Adrenal gland (tissue), 19 donors: ENCODE measurements at regions of chr5 and their contacts with region 1.

Region 1: GRCh38 chr5:140632150-140633020 is 590 bp downstream of the CD14 start:
- DNase-seq: peak; percentile 59 to 86 (median 78)
- H3K4me3 ChIP-seq: peak overlapping the region; percentile 34 to 78 (median 54)
- H3K27ac ChIP-seq: peak overlapping the region; percentile 55 to 95 (median 89)
- H3K4me1 ChIP-seq: peaks cover 0 to 38% of the 10 kb centered on the region in 2 donors
- H3K27me3 ChIP-seq: no peaks in the 10 kb centered on the region
- CTCF ChIP-seq: no peak
- POLR2A ChIP-seq: peak; percentile 3 to 45

Region 2: DNA sequence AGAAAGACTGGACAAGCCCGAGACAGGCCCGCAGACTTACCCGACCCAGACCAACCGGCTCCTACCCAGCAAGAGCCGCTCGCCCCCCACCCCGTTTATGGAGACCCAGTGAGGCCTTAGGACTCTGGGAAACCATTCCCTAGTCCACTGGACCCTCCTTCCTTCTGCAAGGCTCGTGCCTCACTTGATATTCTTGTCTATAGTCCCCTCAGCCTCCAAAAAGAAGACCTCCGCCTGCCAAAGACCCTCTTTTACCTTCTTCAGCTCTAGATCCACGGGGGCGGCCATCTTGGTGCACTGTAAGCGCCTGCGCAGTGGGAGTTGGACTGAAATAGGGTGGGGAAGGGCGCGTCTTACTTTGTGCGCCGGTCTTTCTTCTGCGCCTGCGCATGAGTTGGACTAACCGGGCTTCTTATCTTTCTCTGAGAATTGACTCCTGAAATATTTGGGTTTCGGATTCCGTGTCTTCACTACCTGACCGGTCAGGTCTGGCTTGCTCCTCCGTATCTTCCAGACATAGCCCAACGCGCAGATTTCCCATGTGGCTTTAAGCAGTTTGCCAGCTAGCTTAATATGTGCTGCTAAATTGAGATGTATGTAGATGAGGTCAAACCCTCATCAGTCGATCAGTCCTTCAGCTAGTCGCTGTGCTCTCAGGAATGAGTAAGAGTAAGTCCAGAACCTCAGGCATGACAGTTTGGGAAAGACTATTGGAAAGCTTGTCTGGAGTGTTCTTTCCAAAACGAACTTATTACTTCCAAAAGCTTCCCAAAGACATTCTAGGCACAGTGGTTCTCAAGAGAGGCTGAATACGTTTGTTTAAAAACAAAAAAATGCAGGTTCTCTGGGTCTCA is 329.4 kb before region 1 on chr5 and contains the start of gene PFDN1:
- intact Hi-C with region 1: no loop called
- DNase-seq: peak; percentile 92 to 98 (median 96)
- H3K4me3 ChIP-seq: peak within 1 kb of the TSS; percentile 13 to 69 (median 59)
- H3K27ac ChIP-seq: peak within 1 kb of the TSS; percentile 10 to 83 (median 70)
- H3K4me1 ChIP-seq: peaks cover 11 to 31% of the 10 kb centered on the region in 2 donors
- H3K27me3 ChIP-seq: no peaks in the 10 kb centered on the region
- CTCF ChIP-seq: no peak
- POLR2A ChIP-seq: peak in 1 of 2 donors; percentile 54
- total RNA-seq, gene PFDN1: 49.1 to 194 (median 77.1) TPM

Region 3: GRCh38 chr5:140575309-140575708 is 57.1 kb before region 1 on chr5:
- intact Hi-C with region 1: loop called in 1 of 2 experiments (anchors 5 kb)
- DNase-seq: peak; percentile 67 to 87 (median 79)
- H3K4me3 ChIP-seq: no peak overlapping the region
- H3K27ac ChIP-seq: peak overlapping the region in 1 of 5 donors; percentile 80
- H3K4me1 ChIP-seq: peaks cover 5 to 34% of the 10 kb centered on the region in 2 donors
- H3K27me3 ChIP-seq: no peaks in the 10 kb centered on the region
- CTCF ChIP-seq: peak; percentile 40 to 77 (median 67)
- POLR2A ChIP-seq: no peak

Region 4: DNA sequence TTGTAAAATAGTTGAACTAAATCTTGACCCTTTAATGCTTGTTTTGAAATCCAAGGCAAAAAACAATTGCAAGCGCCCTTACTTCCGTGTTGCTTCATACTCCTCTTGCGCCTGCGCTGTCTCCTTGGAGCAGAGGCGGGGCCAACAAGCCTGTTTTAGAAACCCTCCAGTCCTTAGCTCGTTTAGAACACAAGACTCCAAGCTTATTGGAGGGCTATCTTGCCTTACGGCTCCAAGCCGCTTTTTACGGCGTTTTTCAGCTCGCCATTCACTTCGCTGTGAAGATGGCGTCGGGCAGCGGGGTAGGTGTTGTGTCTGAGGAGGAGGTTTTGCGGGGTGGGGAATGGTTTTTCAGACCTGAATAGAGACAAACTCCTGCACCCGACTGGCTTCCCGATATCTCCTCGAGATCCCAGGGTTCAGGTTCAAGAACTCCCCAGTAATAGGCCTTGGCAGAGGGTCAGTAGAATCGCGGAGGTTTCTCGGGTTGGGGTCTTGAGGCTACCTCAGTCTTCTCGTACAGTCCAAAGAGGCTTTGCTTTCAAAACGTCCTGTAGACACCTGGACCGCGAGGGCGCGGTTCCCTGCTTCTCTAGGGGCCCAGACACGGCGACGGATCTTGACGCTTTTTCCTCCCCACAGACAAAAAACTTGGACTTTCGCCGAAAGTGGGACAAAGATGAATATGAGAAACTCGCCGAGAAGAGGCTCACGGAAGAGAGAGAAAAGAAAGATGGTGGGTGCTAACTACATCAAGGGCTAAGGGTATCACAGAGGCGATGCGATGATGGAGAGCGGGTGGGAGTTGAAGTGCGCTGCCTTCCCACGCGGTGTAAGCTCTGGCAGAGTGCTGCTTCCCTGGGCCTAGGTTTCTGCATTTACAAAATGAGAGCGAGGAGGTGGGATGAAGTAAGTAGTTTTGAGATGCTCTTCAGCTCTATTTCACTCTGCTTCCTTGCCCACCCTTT is 68.1 kb after region 1 on chr5 and contains the start of gene ZMAT2:
- intact Hi-C with region 1: no loop called
- DNase-seq: peak; percentile 94 to 98 (median 96)
- H3K4me3 ChIP-seq: peak within 1 kb of the TSS in 3 of 4 donors; percentile 12 to 85 (median 66)
- H3K27ac ChIP-seq: peak within 1 kb of the TSS in 4 of 5 donors; percentile 44 to 79 (median 54)
- H3K4me1 ChIP-seq: peaks cover 9 to 15% of the 10 kb centered on the region in 2 donors
- H3K27me3 ChIP-seq: no peaks in the 10 kb centered on the region
- CTCF ChIP-seq: no peak
- POLR2A ChIP-seq: peak; percentile 25 to 79
- total RNA-seq, gene ZMAT2: 24.6 to 122 (median 51.4) TPM